HepG2 (cell line): ENCODE measurements at regions of chr10 and their contacts with region 1.

Region 1: GRCh38 chr10:69800109-69800508 is 1.6 kb upstream of the COL13A1 start:
- DNase-seq: peak; percentile 65
- ATAC-seq: peak; percentile 86
- H3K4me3 ChIP-seq: no peak overlapping the region
- H3K27ac ChIP-seq: no peak overlapping the region
- H3K4me1 ChIP-seq: no peaks in the 10 kb centered on the region
- H3K27me3 ChIP-seq: peaks cover 15 to 46% of the 10 kb centered on the region in 2 experiments; a peak in 4 of 5 replicates
- CTCF ChIP-seq: peak; percentile 68
- EP300 ChIP-seq: no peak
- POLR2A ChIP-seq: no peak
- RAD21 ChIP-seq: no peak

Region 2: GRCh38 chr10:69644658-69645295 is 155.3 kb before region 1 on chr10:
- CTCF ChIA-PET with region 1: interaction called, 13 read pairs
- POLR2A ChIA-PET with region 1: no interaction called
- in situ Hi-C with region 1: no loop called
- intact Hi-C with region 1: no loop called
- DNase-seq: peak; percentile 21
- ATAC-seq: peak; percentile 82
- H3K4me3 ChIP-seq: no peak overlapping the region
- H3K27ac ChIP-seq: no peak overlapping the region
- H3K4me1 ChIP-seq: no peaks in the 10 kb centered on the region
- H3K27me3 ChIP-seq: peaks cover 1 to 8% of the 10 kb centered on the region in 2 experiments; a peak in 3 of 5 replicates
- CTCF ChIP-seq: peak; percentile 85
- EP300 ChIP-seq: no peak
- POLR2A ChIP-seq: no peak
- RAD21 ChIP-seq: peak; percentile 79

Region 3: GRCh38 chr10:69684020-69684980 is 115.8 kb before region 1 on chr10:
- CTCF ChIA-PET with region 1: no interaction called
- POLR2A ChIA-PET with region 1: no interaction called
- in situ Hi-C with region 1: no loop called
- intact Hi-C with region 1: no loop called
- DNase-seq: peak; percentile 46
- ATAC-seq: peak; percentile 89
- H3K4me3 ChIP-seq: peak overlapping the region in 2 of 3 experiments; percentile 11 to 60; a peak in 3 of 6 replicates
- H3K27ac ChIP-seq: peak overlapping the region; percentile 47
- H3K4me1 ChIP-seq: peaks cover 29% of the 10 kb centered on the region
- H3K27me3 ChIP-seq: peaks cover 2 to 28% of the 10 kb centered on the region in 2 experiments; a peak in 2 of 5 replicates
- CTCF ChIP-seq: no peak
- EP300 ChIP-seq: no peak
- POLR2A ChIP-seq: peak in 1 of 2 experiments; percentile 19; a peak in 1 of 4 replicates
- RAD21 ChIP-seq: no peak